ENCODE measurements at regions of chr13 and their contacts with region 1.

Region 1: DNA sequence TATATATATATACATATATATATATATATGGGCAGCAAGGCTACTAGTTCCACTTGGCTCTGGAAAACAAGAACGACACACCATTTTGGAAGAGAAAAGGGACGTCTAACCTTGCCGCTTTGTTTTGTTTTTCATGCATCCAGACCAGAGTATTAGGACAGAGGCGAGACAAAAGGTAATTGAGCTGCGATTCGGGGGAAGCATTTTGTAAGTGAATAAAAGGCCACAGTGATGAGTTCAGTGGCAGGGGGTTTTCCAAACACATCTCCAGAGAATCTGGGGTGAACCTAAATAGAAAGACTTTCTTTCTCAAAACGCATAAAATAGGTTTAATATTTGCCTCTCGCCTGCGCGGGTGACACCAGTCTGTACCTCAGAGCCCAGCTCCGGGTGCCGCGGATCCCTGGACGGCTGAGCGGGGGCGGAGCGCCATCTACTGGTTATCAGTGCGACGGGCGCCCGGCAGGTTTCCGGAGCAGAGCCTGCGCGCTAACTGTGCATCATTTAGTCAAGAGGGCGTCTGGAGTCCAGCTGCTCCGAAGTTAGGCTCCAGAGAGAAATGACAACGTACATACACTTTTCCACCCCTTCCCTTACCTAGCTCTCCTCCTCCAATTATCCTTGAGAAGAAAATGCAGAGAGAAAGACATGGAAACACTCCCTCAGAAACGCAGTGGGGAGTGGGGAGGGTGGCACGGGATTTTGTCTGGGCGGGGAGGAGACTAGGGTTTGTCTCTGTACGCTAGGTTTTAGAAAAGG is 262.3 kb downstream of the TBC1D4 start:
- DNase-seq: peak; percentile 71 to 80 (median 78)
- H3K4me3 ChIP-seq: no peak overlapping the region
- H3K4me3 Mint-ChIP-seq: peak overlapping the region in 7 of 8 donors; percentile 14 to 77 (median 55)
- H3K27ac ChIP-seq: no peak overlapping the region
- H3K27ac Mint-ChIP-seq: peak overlapping the region in 3 of 7 donors; percentile 6 to 79 (median 43)
- H3K4me1 ChIP-seq: peaks cover 7% of the 10 kb centered on the region
- H3K4me1 Mint-ChIP-seq: peaks cover 6 to 7% (median 6%) of the 10 kb centered on the region in 4 donors
- H3K27me3 ChIP-seq: peaks cover 3% of the 10 kb centered on the region
- H3K27me3 Mint-ChIP-seq: peaks cover 21 to 22% of the 10 kb centered on the region in 2 donors

Region 2: GRCh38 chr13:73715114-73715910 is 1504.3 kb before region 1 on chr13:
- CTCF ChIA-PET with region 1: interaction called, 3 read pairs
- POLR2A ChIA-PET with region 1: no interaction called
- intact Hi-C with region 1: loop called (anchors 5 kb)
- DNase-seq: peak; percentile 71 to 91 (median 79)
- H3K4me3 ChIP-seq: peak overlapping the region in 1 of 2 donors; percentile 6
- H3K4me3 Mint-ChIP-seq: peak overlapping the region; percentile 58 to 88 (median 78)
- H3K27ac ChIP-seq: peak overlapping the region; percentile 41
- H3K27ac Mint-ChIP-seq: peak overlapping the region; percentile 84 to 98 (median 94)
- H3K4me1 ChIP-seq: peaks cover 52% of the 10 kb centered on the region
- H3K4me1 Mint-ChIP-seq: peaks cover 48 to 70% (median 64%) of the 10 kb centered on the region in 4 donors
- H3K27me3 ChIP-seq: no peaks in the 10 kb centered on the region
- H3K27me3 Mint-ChIP-seq: no peaks in the 10 kb centered on the region

Region 3: DNA sequence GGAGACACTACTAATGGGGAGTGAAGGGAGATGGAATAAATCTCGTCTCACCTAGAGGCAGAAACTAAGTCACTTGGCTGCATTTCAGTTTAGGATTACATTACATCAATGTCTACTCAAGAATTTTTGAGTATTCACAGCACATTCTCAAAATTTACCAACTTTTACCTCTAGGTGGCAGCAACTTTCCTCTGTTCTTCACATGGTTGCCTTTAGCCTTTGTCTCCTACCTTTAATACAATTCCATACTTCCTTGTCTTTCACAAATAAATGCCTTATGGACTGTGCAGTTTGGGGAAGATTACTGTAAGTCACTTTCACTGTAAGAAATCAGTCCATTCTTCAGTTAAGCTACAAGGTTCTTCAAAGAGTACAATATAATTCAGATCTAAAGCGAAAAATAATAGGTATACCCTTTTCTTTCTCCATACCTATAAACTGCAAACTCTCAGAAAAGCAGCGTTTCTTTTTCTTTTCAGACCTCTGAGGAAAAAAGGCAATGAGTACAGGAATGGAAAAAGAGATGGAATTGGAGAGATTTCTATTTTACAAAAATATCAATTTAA is 1464.8 kb before region 1 on chr13:
- CTCF ChIA-PET with region 1: interaction called, 15 read pairs
- POLR2A ChIA-PET with region 1: no interaction called
- intact Hi-C with region 1: loop called (anchors 1 kb)
- DNase-seq: peak in 4 of 5 donors; percentile 42 to 61 (median 50)
- H3K4me3 ChIP-seq: no peak overlapping the region
- H3K4me3 Mint-ChIP-seq: no peak overlapping the region
- H3K27ac ChIP-seq: no peak overlapping the region
- H3K27ac Mint-ChIP-seq: peak overlapping the region in 6 of 7 donors; percentile 8 to 84 (median 56)
- H3K4me1 ChIP-seq: peaks cover 43% of the 10 kb centered on the region
- H3K4me1 Mint-ChIP-seq: peaks cover 36 to 58% (median 49%) of the 10 kb centered on the region in 4 donors
- H3K27me3 ChIP-seq: no peaks in the 10 kb centered on the region
- H3K27me3 Mint-ChIP-seq: no peaks in the 10 kb centered on the region

Region 4: DNA sequence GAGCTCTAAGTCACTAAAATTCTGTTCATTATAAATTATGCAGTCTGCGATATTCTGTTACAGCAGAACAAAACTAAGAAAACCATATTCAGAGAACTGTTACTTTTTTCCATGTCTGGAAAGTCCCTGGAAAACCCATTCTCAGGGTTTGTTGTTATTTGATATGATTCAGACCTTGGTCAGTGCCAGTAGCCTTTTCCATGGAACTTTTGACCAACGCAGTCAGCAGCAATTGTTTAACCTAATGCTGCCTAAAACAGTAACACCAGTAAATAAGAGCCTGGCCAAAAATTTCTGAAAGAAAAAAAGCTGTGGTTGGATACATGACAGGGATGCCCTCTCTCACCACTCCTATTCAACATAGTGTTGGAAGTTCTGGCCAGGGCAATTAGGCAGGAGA is 140.4 kb before region 1 on chr13:
- CTCF ChIA-PET with region 1: no interaction called
- POLR2A ChIA-PET with region 1: no interaction called
- intact Hi-C with region 1: no loop called
- DNase-seq: no peak
- H3K4me3 ChIP-seq: no peak overlapping the region
- H3K4me3 Mint-ChIP-seq: no peak overlapping the region
- H3K27ac ChIP-seq: no peak overlapping the region
- H3K27ac Mint-ChIP-seq: no peak overlapping the region
- H3K4me1 ChIP-seq: no peaks in the 10 kb centered on the region
- H3K4me1 Mint-ChIP-seq: no peaks in the 10 kb centered on the region
- H3K27me3 ChIP-seq: peaks cover 2% of the 10 kb centered on the region
- H3K27me3 Mint-ChIP-seq: peaks cover 9 to 10% of the 10 kb centered on the region in 2 donors

Region 5: GRCh38 chr13:75202981-75203380 is 16.7 kb before region 1 on chr13:
- CTCF ChIA-PET with region 1: interaction called, 19 read pairs
- POLR2A ChIA-PET with region 1: no interaction called
- intact Hi-C with region 1: no loop called
- DNase-seq: no peak
- H3K4me3 ChIP-seq: no peak overlapping the region
- H3K4me3 Mint-ChIP-seq: no peak overlapping the region
- H3K27ac ChIP-seq: no peak overlapping the region
- H3K27ac Mint-ChIP-seq: no peak overlapping the region
- H3K4me1 ChIP-seq: no peaks in the 10 kb centered on the region
- H3K4me1 Mint-ChIP-seq: no peaks in the 10 kb centered on the region
- H3K27me3 ChIP-seq: no peaks in the 10 kb centered on the region
- H3K27me3 Mint-ChIP-seq: peaks cover 2 to 9% of the 10 kb centered on the region in 2 donors